ENCODE measurements at regions of chr6 and their contacts with region 1.

Region 1: GRCh38 chr6:109690737-109691621 is at the starts of genes AK9 and FIG4:
- DNase-seq: peak; percentile 96
- H3K4me3 Mint-ChIP-seq: peak within 1 kb of the TSS; percentile 91
- H3K27ac Mint-ChIP-seq: peak within 1 kb of the TSS; percentile 96
- H3K4me1 Mint-ChIP-seq: peaks cover 12% of the 10 kb centered on the region
- H3K27me3 Mint-ChIP-seq: no peaks in the 10 kb centered on the region
- CTCF ChIP-seq: peak; percentile 18
- total RNA-seq, gene AK9: 4.7 and 7.5 TPM in 2 replicates
- total RNA-seq, gene FIG4: 7.9 and 9.5 TPM in 2 replicates

Region 2: GRCh38 chr6:109526905-109527628 is 163.9 kb before region 1 on chr6:
- CTCF ChIA-PET with region 1: interaction called, 7 read pairs
- POLR2A ChIA-PET with region 1: no interaction called
- intact Hi-C with region 1: loop called (anchors 2 kb)
- DNase-seq: peak; percentile 80
- H3K4me3 Mint-ChIP-seq: no peak overlapping the region
- H3K27ac Mint-ChIP-seq: no peak overlapping the region
- H3K4me1 Mint-ChIP-seq: peaks cover 6% of the 10 kb centered on the region
- H3K27me3 Mint-ChIP-seq: peaks cover 2% of the 10 kb centered on the region
- CTCF ChIP-seq: peak; percentile 70

Region 3: GRCh38 chr6:109595998-109596397 is 95.0 kb before region 1 on chr6:
- CTCF ChIA-PET with region 1: interaction called, 3 read pairs
- POLR2A ChIA-PET with region 1: no interaction called
- intact Hi-C with region 1: loop called (anchors 1 kb)
- DNase-seq: peak; percentile 30
- H3K4me3 Mint-ChIP-seq: no peak overlapping the region
- H3K27ac Mint-ChIP-seq: no peak overlapping the region
- H3K4me1 Mint-ChIP-seq: no peaks in the 10 kb centered on the region
- H3K27me3 Mint-ChIP-seq: no peaks in the 10 kb centered on the region
- CTCF ChIP-seq: peak; percentile 42